Naive thymus-derived CD4-positive, alpha-beta T cell (primary cell): ENCODE measurements at regions of chr3 and their contacts with region 1.

Region 1: DNA sequence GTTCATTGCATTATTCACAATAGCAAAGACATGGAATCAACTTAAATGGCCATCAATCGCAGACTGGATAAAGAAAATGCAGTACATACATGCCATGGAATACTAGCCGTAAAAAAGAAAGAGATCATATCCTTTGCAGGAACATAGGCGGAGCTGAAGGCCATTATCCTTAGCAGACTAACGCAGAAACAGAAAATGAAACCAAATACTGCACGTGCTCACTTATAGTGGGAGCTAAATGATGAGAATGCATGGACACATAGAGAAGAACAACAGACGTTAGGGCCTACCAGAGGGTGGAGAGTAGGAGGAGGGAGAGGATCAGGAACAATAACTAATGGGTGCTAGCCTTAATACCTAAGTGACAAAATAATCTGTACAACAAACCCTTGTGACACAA is 57.9 kb downstream of the RASA2 start:
- DNase-seq: peak in 7 of 9 donors; percentile 10 to 51 (median 38)
- ATAC-seq: peak; percentile 79
- H3K4me3 ChIP-seq: no peak overlapping the region
- H3K4me3 Mint-ChIP-seq: peak overlapping the region; percentile 49 to 86 (median 63)
- H3K27ac ChIP-seq: peak overlapping the region; percentile 34
- H3K27ac Mint-ChIP-seq: peak overlapping the region; percentile 56 to 96 (median 89)
- H3K4me1 ChIP-seq: peaks cover 11 to 13% of the 10 kb centered on the region in 2 donors
- H3K4me1 Mint-ChIP-seq: peaks cover 44 to 93% (median 90%) of the 10 kb centered on the region in 7 donors
- H3K27me3 ChIP-seq: no peaks in the 10 kb centered on the region
- H3K27me3 Mint-ChIP-seq: no peaks in the 10 kb centered on the region

Region 2: DNA sequence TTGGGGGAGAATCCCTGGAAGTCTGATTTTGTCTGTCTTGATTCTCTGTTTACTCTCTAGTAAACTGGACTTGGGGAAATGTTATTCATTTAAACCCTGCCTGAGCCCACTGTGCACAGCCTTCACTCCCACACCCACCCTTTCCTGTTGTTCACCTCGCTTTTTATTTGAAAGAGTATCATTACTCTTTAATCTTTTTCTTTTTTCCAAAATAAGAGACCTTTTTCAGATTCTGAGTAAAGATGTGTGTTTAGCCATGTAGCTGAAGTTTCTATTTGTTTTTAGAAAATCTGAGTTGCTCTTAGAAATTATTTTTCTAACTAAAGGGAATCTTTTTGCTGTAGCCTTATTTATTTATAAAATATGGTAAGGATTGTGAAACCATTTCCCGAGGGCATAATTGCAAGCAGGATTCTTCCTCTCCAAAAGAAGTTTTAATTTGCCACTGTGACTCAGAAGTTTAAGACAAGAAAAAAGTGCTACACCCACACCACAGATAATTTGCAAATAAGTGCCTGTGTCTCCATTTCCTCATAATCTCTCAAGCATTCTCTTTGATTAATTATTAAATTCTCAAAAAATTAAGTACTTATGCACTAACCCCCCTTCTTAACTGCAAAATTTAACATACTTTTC is 14.4 kb before region 1 on chr3:
- CTCF ChIA-PET with region 1: interaction called, 6 read pairs
- POLR2A ChIA-PET with region 1: interaction called, 4 read pairs
- intact Hi-C with region 1: loop called in 1 of 2 experiments (anchors 1 kb)
- DNase-seq: peak in 6 of 9 donors; percentile 44 to 74 (median 60)
- ATAC-seq: peak; percentile 87
- H3K4me3 ChIP-seq: peak overlapping the region; percentile 4
- H3K4me3 Mint-ChIP-seq: peak overlapping the region; percentile 40 to 94 (median 82)
- H3K27ac ChIP-seq: peak overlapping the region; percentile 62
- H3K27ac Mint-ChIP-seq: peak overlapping the region in 8 of 9 donors; percentile 87 to 97 (median 94)
- H3K4me1 ChIP-seq: peaks cover 22 to 77% of the 10 kb centered on the region in 2 donors
- H3K4me1 Mint-ChIP-seq: peaks cover 40 to 86% (median 83%) of the 10 kb centered on the region in 7 donors
- H3K27me3 ChIP-seq: no peaks in the 10 kb centered on the region
- H3K27me3 Mint-ChIP-seq: no peaks in the 10 kb centered on the region

Region 3: GRCh38 chr3:141669434-141669833 is 124.7 kb after region 1 on chr3:
- CTCF ChIA-PET with region 1: no interaction called
- POLR2A ChIA-PET with region 1: no interaction called
- intact Hi-C with region 1: no loop called
- DNase-seq: no peak
- ATAC-seq: no peak
- H3K4me3 ChIP-seq: no peak overlapping the region
- H3K4me3 Mint-ChIP-seq: no peak overlapping the region
- H3K27ac ChIP-seq: no peak overlapping the region
- H3K27ac Mint-ChIP-seq: no peak overlapping the region
- H3K4me1 ChIP-seq: no peaks in the 10 kb centered on the region
- H3K4me1 Mint-ChIP-seq: peaks cover 0 to 1% (median 0%) of the 10 kb centered on the region in 7 donors
- H3K27me3 ChIP-seq: no peaks in the 10 kb centered on the region
- H3K27me3 Mint-ChIP-seq: peaks cover 18 to 29% (median 25%) of the 10 kb centered on the region in 5 donors